RWPE1 (cell line): ENCODE measurements at regions of chr20 and their contacts with region 1.

Region 1: DNA sequence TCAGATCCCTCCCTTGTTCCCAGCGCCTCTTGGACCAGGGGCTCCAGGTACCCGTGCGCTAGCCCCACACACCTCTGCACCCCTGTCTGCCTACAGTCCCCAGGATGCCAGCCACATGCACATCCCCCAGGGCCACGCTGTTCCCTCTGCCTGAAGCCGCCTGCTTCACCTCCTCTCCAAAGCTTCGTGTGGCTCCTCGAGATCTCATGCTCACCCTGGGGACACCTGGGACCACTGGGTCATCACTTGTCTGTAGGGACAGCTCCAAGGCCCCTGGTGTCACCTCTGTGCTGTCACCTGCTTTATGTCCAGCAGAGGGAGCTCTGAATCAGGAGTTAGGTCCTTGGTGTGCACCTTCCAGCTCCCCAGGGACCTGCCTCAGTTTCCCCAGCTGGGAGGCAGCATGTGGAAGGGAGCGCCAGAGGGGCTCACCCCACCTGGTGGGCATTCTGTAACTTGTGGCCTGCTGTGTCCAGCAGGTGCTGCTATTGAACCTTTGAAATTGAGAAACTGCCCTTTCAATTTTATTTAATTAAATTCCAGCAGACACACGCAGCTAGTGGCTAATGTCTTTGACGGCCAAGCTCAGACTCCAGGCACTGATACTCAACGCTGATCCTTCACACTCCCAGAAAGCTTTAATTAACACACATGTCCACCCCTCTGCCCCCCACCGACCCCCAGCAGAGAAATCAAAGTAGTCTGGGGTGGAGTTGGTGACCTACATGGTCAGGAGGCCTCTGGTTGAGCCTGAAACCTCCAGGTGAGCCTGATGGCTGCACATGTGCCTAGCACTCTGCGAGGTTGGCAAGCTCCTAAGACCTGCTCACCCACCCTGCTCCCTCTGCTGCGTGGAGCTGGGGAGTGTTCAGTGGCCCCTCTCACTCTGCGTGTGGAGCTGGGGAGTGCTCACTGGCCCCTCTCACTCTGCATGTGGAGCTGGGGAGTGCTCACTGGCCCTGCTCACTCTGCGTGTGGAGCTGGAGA is 7.6 kb upstream of the YTHDF1 start:
- DNase-seq: peak; percentile 48
- H3K27ac ChIP-seq: peak overlapping the region; percentile 59
- CTCF ChIP-seq: peak; percentile 97

Region 2: GRCh38 chr20:63196768-63197470 is 26.6 kb before region 1 on chr20:
- CTCF ChIA-PET with region 1: interaction called, 13 read pairs
- POLR2A ChIA-PET with region 1: interaction called, 4 read pairs
- DNase-seq: no peak
- H3K27ac ChIP-seq: peak overlapping the region; percentile 47
- CTCF ChIP-seq: no peak

Region 3: GRCh38 chr20:63246490-63247288 is 23.2 kb after region 1 on chr20:
- CTCF ChIA-PET with region 1: interaction called, 48 read pairs
- POLR2A ChIA-PET with region 1: no interaction called
- DNase-seq: no peak
- H3K27ac ChIP-seq: no peak overlapping the region
- CTCF ChIP-seq: no peak

Region 4: GRCh38 chr20:63272584-63273579 is 49.4 kb after region 1 on chr20 and contains the start of gene ARFGAP1:
- CTCF ChIA-PET with region 1: interaction called, 13 read pairs
- POLR2A ChIA-PET with region 1: interaction called, 4 read pairs
- DNase-seq: peak; percentile 96
- H3K27ac ChIP-seq: peak within 1 kb of the TSS; percentile 63
- CTCF ChIP-seq: no peak

Region 5: GRCh38 chr20:63309261-63310071 is 86.0 kb after region 1 on chr20:
- CTCF ChIA-PET with region 1: interaction called, 33 read pairs
- POLR2A ChIA-PET with region 1: no interaction called
- DNase-seq: peak; percentile 78
- H3K27ac ChIP-seq: no peak overlapping the region
- CTCF ChIP-seq: peak; percentile 97